Head of caudate nucleus (tissue), 42 donors: ENCODE measurements at regions of chr18 and their contacts with region 1.

Region 1: GRCh38 chr18:27605107-27605834 is 420.2 kb upstream of the CHST9 start:
- DNase-seq: peak in 41 of 42 donors; percentile 38 to 89 (median 72)

Region 2: GRCh38 chr18:27656167-27656778 is 51.0 kb after region 1 on chr18:
- intact Hi-C with region 1: no loop called
- DNase-seq: no peak

Region 3: DNA sequence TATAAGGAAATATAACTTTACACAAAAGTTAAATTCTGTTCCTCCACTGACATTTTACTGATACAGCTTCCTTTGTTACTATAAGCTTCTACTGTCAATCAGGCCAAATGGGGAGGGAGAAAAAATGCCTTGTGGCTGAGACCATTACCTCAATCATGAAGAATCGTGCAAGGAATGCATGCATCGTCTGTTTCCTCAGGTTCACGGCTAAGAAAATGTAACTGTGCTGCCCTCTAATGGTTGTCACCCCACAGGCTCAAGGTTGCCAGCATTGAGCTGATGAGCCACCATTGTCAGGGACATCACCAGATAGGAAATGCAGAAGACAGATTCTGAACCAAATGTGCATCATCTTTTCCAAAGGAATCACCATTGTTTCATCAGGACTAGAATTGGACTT is 144.7 kb after region 1 on chr18:
- intact Hi-C with region 1: loop called (anchors 10 kb)
- DNase-seq: peak in 41 of 42 donors; percentile 5 to 75 (median 46)